CD4-positive, alpha-beta T cell (primary cell): ENCODE measurements at regions of chr17 and their contacts with region 1.

Region 1: DNA sequence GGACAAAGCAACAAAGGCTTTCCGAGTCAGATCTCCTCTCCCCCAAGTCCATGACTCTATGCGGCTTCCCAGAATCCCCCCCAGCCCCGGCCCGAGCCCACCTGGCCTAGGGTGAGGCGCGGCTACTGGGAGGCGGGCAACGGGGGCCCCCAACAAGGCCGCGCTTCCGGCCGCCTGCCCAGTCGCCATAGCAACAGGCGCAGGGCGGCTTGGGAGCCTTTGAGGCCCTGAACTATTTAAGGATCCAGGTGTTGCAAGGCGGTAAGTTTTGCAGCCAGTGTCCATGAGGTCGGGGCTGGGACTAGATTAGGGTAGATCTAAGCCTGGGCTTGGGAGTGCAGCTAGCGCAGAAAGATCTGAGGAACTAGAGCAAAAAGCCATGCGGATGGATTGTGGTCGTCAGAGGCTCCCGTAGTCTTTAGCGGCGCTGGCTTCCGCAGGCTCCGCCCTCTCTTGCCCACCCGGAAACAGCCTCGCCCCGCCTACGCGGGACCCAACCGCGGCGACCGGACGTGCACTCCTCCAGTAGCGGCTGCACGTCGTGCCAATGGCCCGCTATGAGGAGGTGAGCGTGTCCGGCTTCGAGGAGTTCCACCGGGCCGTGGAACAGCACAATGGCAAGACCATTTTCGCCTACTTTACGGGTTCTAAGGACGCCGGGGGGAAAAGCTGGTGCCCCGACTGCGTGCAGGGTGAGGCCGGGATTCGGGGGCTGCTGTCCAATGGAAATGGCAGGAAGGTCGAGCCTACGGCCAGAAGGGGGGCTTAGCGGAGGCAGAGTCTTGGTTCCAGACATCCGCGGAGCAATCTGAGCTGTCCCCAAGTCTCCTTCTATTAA is at the starts of genes KIAA0753 and TXNDC17:
- DNase-seq: peak; percentile 71 to 94 (median 88)
- ATAC-seq: peak; percentile 81
- H3K4me3 ChIP-seq: peak within 1 kb of the TSS; percentile 98
- H3K4me3 Mint-ChIP-seq: peak within 1 kb of the TSS; percentile 99
- H3K27ac ChIP-seq: peak within 1 kb of the TSS; percentile 76 to 88
- H3K27ac Mint-ChIP-seq: peak within 1 kb of the TSS; percentile 95
- H3K4me1 ChIP-seq: peaks cover 38% of the 10 kb centered on the region
- H3K4me1 Mint-ChIP-seq: peaks cover 78% of the 10 kb centered on the region
- H3K27me3 ChIP-seq: no peaks in the 10 kb centered on the region
- H3K27me3 Mint-ChIP-seq: no peaks in the 10 kb centered on the region
- CTCF ChIP-seq: no peak
- total RNA-seq, gene KIAA0753: 8.9 to 11.7 TPM
- total RNA-seq, gene TXNDC17: 13.2 to 17.7 TPM

Region 2: DNA sequence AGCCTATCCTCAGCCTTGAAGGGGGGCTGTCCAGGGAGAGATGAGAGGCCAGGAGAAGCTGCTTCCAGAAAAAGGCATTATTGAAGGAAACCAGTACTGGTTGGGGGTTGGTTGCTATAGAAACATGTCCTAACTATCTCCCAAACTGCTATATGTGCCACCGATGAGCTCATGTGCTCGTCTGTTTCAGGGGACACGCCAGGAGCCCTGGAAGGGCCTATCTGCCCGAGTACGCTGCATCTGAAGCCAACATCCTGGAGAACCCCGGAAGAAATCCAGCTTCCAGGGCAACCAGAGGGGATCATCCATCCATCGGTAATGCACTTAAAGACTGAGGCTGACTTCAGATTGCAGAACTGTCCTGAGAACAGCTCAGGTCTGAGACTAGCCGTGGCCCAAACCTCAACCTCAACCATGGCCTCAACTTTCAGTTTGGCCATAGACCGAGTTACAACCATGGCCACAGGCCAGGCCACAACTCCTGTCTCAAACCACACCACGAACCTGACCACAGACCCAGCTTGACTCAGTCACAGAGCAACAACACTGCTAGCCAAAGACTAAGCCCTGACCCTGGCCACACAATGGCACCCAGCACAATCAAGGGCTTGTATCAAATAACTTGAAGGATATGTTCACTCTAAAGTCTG is 94.6 kb before region 1 on chr17:
- CTCF ChIA-PET with region 1: no interaction called
- POLR2A ChIA-PET with region 1: no interaction called
- intact Hi-C with region 1: no loop called
- DNase-seq: no peak
- ATAC-seq: no peak
- H3K4me3 ChIP-seq: no peak overlapping the region
- H3K4me3 Mint-ChIP-seq: no peak overlapping the region
- H3K27ac ChIP-seq: no peak overlapping the region
- H3K27ac Mint-ChIP-seq: no peak overlapping the region
- H3K4me1 ChIP-seq: peaks cover 9% of the 10 kb centered on the region
- H3K4me1 Mint-ChIP-seq: peaks cover 11% of the 10 kb centered on the region
- H3K27me3 ChIP-seq: no peaks in the 10 kb centered on the region
- H3K27me3 Mint-ChIP-seq: no peaks in the 10 kb centered on the region
- CTCF ChIP-seq: no peak

Region 3: GRCh38 chr17:6651357-6651918 is 10.7 kb after region 1 on chr17 and contains the starts of genes C17orf100 and MED31:
- CTCF ChIA-PET with region 1: interaction called, 5 read pairs
- POLR2A ChIA-PET with region 1: interaction called, 30 read pairs
- intact Hi-C with region 1: loop called in 1 of 2 experiments (anchors 1 kb)
- DNase-seq: peak; percentile 87 to 98 (median 94)
- ATAC-seq: peak; percentile 81
- H3K4me3 ChIP-seq: peak within 1 kb of the TSS; percentile 64
- H3K4me3 Mint-ChIP-seq: peak within 1 kb of the TSS; percentile 99
- H3K27ac ChIP-seq: peak within 1 kb of the TSS; percentile 98
- H3K27ac Mint-ChIP-seq: peak within 1 kb of the TSS; percentile 99
- H3K4me1 ChIP-seq: peaks cover 35% of the 10 kb centered on the region
- H3K4me1 Mint-ChIP-seq: peaks cover 73% of the 10 kb centered on the region
- H3K27me3 ChIP-seq: peaks cover 0 to 4% of the 10 kb centered on the region in 2 experiments
- H3K27me3 Mint-ChIP-seq: no peaks in the 10 kb centered on the region
- CTCF ChIP-seq: no peak
- total RNA-seq, gene C17orf100: 0.69 to 0.70 TPM
- total RNA-seq, gene MED31: 31.4 to 32.0 TPM

Region 4: DNA sequence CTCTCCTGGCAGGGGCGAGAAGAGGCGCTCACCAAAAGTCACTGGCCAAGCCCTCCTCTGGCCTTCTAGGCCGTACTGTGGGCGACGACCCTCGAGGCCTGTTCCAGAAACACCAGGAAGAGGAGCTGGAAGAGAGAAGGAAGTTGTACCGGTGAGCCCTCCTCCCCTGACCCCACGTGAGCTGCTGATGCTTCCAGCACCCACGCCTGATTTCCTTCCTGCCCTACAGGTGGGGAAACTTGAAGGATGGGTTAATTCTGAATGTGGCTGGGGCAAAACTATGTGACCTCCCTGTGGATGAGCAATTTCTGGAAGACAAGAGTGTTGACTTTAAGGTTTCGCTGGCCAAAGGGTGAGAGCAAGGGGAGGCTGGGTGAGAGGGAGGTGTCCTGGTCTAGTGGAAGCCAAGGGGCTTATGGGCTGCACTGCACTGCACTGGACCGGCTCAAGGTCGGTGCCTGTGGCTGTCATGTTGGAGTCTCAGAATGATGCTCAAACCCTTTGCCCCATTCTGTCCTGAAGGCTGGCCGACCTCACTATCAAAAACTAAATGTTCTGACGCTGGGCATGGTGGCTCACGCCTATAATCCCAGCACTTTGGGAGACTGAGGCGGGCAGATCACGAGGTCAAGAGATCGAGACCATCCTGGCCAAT is 17.0 kb after region 1 on chr17:
- CTCF ChIA-PET with region 1: interaction called, 3 read pairs
- POLR2A ChIA-PET with region 1: interaction called, 13 read pairs
- intact Hi-C with region 1: no loop called
- DNase-seq: no peak
- ATAC-seq: no peak
- H3K4me3 ChIP-seq: peak overlapping the region; percentile 66
- H3K4me3 Mint-ChIP-seq: peak overlapping the region; percentile 97
- H3K27ac ChIP-seq: peak overlapping the region; percentile 36 to 53
- H3K27ac Mint-ChIP-seq: peak overlapping the region; percentile 96
- H3K4me1 ChIP-seq: peaks cover 34% of the 10 kb centered on the region
- H3K4me1 Mint-ChIP-seq: peaks cover 48% of the 10 kb centered on the region
- H3K27me3 ChIP-seq: peaks cover 0 to 4% of the 10 kb centered on the region in 2 experiments
- H3K27me3 Mint-ChIP-seq: no peaks in the 10 kb centered on the region
- CTCF ChIP-seq: no peak

Region 5: DNA sequence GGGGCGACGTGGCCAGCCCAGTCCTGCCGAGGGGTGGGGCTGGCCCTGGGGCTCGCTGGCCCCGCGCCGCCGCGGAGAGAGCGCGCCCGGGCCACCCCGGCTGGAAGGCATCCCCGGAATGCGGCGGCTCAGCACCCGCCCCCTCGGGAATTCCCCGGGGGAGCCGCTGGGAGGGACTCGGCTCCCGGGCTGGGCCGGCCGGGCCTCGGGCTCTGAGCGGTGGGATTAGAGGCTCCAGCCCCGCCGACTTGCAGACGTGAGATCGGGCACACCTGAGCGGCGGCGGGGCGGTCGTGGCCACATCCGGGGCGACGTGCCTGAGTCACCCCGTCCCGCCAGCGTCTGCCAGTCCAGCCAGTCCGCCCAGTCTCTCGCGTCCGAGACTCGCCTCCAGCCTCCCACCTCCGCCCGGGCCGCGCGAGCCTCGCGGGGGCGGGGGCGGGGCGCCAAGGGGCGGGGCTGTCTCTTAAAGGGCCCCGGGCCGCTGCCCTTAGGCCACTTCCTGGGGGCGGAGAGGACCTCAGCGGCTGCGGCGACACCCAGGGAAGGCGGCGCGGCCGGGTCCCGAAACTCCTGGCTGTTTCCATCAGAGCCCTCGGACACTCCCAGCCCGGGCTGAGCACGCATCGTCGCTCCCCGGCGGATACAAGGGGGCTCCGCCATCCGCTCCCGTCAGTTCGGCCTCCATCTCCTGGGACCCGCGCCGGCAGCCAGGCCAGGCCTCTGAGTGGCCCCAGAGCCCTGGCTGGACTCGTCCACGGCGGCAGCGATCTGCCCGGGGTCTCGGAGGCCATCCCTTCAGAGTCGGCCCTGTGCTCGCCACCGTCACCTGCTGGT is 711.1 kb after region 1 on chr17 and contains the start of gene KCTD11:
- CTCF ChIA-PET with region 1: no interaction called
- POLR2A ChIA-PET with region 1: no interaction called
- intact Hi-C with region 1: no loop called
- DNase-seq: peak; percentile 45 to 91 (median 70)
- ATAC-seq: peak; percentile 58
- H3K4me3 ChIP-seq: peak within 1 kb of the TSS; percentile 66
- H3K4me3 Mint-ChIP-seq: peak within 1 kb of the TSS; percentile 90
- H3K27ac ChIP-seq: peak within 1 kb of the TSS; percentile 69 to 75
- H3K27ac Mint-ChIP-seq: peak within 1 kb of the TSS; percentile 86
- H3K4me1 ChIP-seq: peaks cover 59% of the 10 kb centered on the region
- H3K4me1 Mint-ChIP-seq: peaks cover 49% of the 10 kb centered on the region
- H3K27me3 ChIP-seq: no peaks in the 10 kb centered on the region
- H3K27me3 Mint-ChIP-seq: no peaks in the 10 kb centered on the region
- CTCF ChIP-seq: no peak
- total RNA-seq, gene KCTD11: 1.3 to 1.6 TPM